AG04450 (cell line): ENCODE measurements at regions of chr17 and their contacts with region 1.

Region 1: DNA sequence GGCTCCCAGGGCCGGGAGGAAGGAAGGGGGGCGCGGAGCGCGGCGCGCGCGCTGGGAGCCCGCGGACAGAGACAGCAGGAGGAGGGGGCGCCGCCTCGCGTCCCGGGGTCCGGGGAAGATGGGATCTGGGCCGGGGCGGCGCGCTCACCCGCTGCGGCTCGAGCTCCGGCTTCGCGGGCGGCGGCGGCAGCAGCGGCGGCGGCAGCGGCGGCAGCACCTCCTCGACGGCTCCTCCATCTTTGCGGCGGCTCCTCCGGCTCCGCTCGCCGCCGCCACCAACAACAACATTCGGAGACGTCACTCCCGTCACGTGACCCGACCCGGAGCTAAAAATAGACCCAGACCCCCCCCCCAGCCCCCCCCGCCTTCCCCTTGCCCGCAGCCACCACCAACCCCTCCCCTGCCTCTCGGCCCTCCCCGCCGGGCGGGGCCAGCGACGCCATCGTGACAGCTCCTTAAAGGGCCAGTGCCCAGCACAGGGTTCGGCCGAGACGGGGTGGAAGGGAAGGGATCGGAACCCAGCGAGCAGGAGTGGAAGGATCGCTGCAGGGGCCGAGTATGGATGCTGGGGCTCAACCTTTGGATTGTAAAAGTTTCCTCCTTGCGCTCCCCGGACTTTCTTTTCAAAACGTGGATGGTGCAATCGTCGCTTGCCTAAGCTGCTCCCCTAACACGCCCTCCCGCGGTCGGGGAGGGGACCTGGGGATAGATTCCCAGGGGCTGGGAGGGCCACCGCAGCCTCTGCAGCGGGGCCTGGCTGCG is at the start of gene HDAC5:
- DNase-seq: peak; percentile 79
- H3K4me3 ChIP-seq: peak within 1 kb of the TSS; percentile 82
- H3K27ac ChIP-seq: peak within 1 kb of the TSS; percentile 98
- H3K27me3 ChIP-seq: no peaks in the 10 kb centered on the region
- CTCF ChIP-seq: peak; percentile 66
- polyA plus RNA-seq, gene HDAC5: 21.3 and 36.7 TPM in 2 replicates

Region 2: GRCh38 chr17:43994272-43995149 is 129.0 kb before region 1 on chr17:
- CTCF ChIA-PET with region 1: no interaction called
- POLR2A ChIA-PET with region 1: no interaction called
- DNase-seq: no peak
- H3K4me3 ChIP-seq: peak overlapping the region; percentile 46
- H3K27ac ChIP-seq: no peak overlapping the region
- H3K27me3 ChIP-seq: peaks cover 13% of the 10 kb centered on the region
- CTCF ChIP-seq: peak; percentile 87

Region 3: DNA sequence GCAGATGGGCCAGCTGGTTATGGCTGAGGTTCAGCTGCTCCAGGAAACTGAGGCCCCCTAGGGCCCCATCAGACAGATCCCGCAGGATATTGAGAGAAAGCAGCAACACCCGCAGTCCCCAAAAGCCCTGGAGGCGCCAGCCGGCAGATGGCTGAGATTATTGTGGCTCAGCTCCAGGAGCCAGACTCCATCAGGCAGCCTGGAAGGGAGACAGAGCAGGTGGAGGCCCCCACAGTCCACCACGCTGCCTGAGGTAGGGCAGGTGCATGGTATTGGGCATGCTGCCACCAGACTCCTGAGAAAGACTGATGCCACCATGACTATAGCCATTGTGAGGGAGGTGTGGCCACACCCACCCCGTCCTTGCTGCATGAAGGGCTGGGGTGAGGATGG is 99.3 kb before region 1 on chr17:
- CTCF ChIA-PET with region 1: no interaction called
- POLR2A ChIA-PET with region 1: interaction called, 10 read pairs
- DNase-seq: no peak
- H3K4me3 ChIP-seq: no peak overlapping the region
- H3K27ac ChIP-seq: no peak overlapping the region
- H3K27me3 ChIP-seq: no peaks in the 10 kb centered on the region
- CTCF ChIP-seq: no peak

Region 4: DNA sequence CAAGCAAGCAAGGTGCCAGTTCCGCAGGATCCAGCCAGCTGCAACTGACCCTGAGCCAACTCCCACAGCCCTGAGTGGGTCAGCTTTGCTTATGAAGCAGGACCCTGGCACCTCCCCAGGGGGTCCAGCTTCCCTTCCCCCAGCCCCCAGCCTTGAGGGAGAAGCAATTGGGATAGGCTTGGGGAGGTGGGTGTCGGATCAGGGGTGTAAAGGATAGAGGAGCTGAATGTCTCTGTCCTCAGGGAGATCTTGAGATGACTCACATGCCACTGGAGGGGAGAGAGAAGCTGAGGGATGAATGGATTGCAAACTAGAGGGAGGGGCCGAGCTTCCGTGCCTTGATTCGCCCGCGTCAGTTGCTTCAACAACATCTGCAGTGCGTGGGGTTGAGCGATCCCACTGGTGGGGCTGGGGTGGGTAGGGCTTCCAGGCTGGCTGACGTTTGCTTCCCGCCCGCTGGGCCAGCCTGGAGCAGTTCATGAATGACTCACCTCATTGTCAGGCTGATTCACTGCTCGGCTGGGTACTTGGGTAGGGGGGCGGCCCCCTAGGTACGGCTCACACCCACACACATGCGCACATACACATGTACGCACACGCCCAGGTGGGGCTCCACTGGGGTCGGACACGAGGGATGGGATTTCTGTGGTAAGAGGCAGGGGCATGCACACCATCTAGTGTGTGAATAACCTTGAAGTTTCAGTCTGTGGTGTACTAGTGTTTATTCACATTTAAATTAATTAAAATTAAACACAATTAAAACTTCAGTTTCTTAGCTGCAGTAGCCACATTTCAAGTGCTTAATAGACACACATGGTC is 14.6 kb after region 1 on chr17:
- CTCF ChIA-PET with region 1: interaction called, 8 read pairs
- POLR2A ChIA-PET with region 1: interaction called, 21 read pairs
- DNase-seq: peak; percentile 98
- H3K4me3 ChIP-seq: peak overlapping the region; percentile 45
- H3K27ac ChIP-seq: peak overlapping the region; percentile 92
- H3K27me3 ChIP-seq: no peaks in the 10 kb centered on the region
- CTCF ChIP-seq: no peak

Region 5: DNA sequence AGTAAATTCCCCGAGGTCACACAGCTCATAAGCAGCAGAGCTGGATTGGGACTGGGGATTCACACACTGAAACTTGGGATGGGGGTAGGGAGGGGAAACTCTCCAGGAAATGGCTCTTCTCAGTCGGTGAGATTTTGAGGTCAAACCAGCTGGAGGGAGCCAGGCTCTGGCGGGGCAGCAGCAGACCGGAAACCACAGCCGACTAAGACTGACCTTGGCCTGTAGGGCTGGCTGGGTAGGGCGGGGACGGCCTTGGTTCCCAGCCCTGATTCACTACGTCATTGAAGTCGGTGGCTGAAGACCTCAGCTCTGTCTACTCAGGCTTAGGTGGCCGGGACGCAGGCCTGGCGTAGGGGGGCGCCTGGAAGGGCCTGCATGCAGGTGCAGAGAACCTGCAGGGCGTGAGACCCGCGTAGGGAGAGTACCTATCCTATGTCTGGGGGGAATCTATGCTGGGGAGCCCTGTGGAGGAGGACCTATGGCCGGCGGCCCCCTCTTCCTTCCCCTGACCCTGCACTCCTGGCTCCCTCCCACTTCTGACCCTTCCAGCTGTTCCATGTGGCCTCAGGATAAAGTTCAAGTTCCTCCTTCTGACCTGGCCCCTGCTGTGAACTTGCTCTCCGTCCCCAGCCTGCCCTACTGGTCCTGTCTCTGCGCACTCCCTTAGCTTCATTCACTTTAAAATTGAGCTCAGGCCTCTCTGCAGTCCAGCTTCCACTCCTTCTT is 156.3 kb after region 1 on chr17:
- CTCF ChIA-PET with region 1: no interaction called
- POLR2A ChIA-PET with region 1: no interaction called
- DNase-seq: peak; percentile 27
- H3K4me3 ChIP-seq: no peak overlapping the region
- H3K27ac ChIP-seq: no peak overlapping the region
- H3K27me3 ChIP-seq: peaks cover 3% of the 10 kb centered on the region
- CTCF ChIP-seq: no peak

Region 6: GRCh38 chr17:44722254-44722653 is 598.7 kb after region 1 on chr17:
- CTCF ChIA-PET with region 1: no interaction called
- POLR2A ChIA-PET with region 1: no interaction called
- DNase-seq: no peak
- H3K4me3 ChIP-seq: no peak overlapping the region
- H3K27ac ChIP-seq: no peak overlapping the region
- H3K27me3 ChIP-seq: no peaks in the 10 kb centered on the region
- CTCF ChIP-seq: no peak